Caco-2 (cell line): ENCODE measurements at regions of chr6 and their contacts with region 1.

Region 1: GRCh38 chr6:403659-404655 is 12.4 kb downstream of the IRF4 start:
- DNase-seq: no peak
- H3K4me3 ChIP-seq: no peak overlapping the region
- H3K4me3 Mint-ChIP-seq: no peak overlapping the region
- H3K27ac Mint-ChIP-seq: no peak overlapping the region
- H3K4me1 ChIP-seq: no peaks in the 10 kb centered on the region
- H3K4me1 Mint-ChIP-seq: no peaks in the 10 kb centered on the region
- H3K27me3 ChIP-seq: no peaks in the 10 kb centered on the region
- H3K27me3 Mint-ChIP-seq: peaks cover 13% of the 10 kb centered on the region
- CTCF ChIP-seq: no peak

Region 2: GRCh38 chr6:391559-392440 is 12.2 kb before region 1 on chr6 and contains the start of gene IRF4:
- CTCF ChIA-PET with region 1: no interaction called
- POLR2A ChIA-PET with region 1: no interaction called
- intact Hi-C with region 1: no loop called
- DNase-seq: no peak
- H3K4me3 ChIP-seq: no peak within 1 kb of the TSS
- H3K4me3 Mint-ChIP-seq: no peak within 1 kb of the TSS
- H3K27ac Mint-ChIP-seq: no peak within 1 kb of the TSS
- H3K4me1 ChIP-seq: no peaks in the 10 kb centered on the region
- H3K4me1 Mint-ChIP-seq: no peaks in the 10 kb centered on the region
- H3K27me3 ChIP-seq: no peaks in the 10 kb centered on the region
- H3K27me3 Mint-ChIP-seq: peaks cover 24% of the 10 kb centered on the region
- CTCF ChIP-seq: no peak
- total RNA-seq, gene IRF4: not detected in 2 replicates

Region 3: DNA sequence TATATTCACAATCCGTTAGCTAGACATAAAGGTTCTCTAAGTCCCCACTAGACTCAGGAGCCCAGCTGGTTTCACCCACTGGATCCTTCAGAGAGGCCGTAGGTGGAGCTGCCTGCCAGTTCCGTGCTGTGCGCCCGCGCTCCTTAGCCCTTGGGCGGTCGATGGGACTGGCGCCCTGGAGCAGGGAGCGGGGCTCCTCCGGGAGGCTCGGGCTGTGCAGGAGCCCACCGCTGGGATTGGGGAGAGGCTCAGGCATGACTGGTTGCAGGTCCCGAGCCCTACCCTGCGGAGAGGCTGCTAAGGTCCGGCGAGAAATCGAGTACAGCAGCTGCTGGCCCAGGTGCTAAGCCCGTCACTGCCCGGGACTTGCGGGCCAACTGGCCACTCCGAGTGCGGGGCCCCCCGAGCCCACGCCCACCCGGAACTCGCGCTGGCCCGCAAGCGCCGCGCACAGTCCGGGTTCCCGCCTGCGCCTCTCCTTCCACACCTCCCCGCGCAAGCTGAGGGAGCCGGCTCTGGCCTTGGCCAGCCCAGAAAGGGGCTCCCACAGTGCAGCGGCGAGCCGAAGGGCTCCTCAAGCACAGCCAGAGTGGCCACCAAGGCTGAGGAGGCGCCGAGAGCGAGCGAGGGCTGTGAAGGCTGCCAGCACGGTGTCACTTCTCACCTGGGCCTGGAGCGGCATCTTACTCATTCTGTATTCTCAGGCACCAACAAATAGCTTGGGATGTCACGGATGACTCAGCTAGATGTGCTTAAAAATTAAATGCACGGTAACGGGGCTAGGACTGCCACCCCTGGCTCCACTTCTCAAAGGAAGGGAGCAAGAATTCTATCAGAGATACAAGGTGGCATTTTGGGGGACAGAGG is 31.7 kb after region 1 on chr6:
- CTCF ChIA-PET with region 1: no interaction called
- POLR2A ChIA-PET with region 1: no interaction called
- intact Hi-C with region 1: loop called (anchors 2 kb)
- DNase-seq: no peak
- H3K4me3 ChIP-seq: no peak overlapping the region
- H3K4me3 Mint-ChIP-seq: no peak overlapping the region
- H3K27ac Mint-ChIP-seq: no peak overlapping the region
- H3K4me1 ChIP-seq: no peaks in the 10 kb centered on the region
- H3K4me1 Mint-ChIP-seq: no peaks in the 10 kb centered on the region
- H3K27me3 ChIP-seq: no peaks in the 10 kb centered on the region; the same call in 1 of the 2 replicates
- H3K27me3 Mint-ChIP-seq: peaks cover 18% of the 10 kb centered on the region
- CTCF ChIP-seq: no peak